ENCODE measurements at regions of chr6 and their contacts with region 1.

Region 1: DNA sequence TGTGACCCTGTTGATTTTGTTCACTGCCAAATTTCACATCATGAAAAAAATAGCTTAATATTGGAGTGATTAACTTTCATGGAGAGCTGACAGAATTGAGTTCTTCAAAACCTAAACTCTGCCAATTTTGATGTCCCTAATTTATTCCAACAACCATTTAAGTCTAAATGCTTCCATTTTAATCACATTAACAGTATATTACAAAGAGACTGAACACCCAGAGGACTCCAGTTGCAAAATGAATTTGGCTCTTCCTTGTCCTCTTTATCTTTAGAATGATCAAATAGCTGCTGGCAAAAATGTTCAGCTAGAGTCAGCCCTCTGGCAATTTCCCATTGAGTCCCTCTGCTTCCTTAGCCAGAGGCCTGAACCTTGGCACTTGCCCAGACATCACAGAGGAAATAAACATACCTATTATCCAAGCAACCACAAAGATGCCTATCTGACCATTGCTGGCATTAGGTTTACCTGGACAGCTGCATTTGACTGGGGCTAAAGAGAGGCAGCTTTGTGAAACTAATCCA is 299.0 kb upstream of the STXBP5 start:
- DNase-seq: no peak
- H3K4me3 ChIP-seq: no peak overlapping the region
- H3K4me3 Mint-ChIP-seq: no peak overlapping the region
- H3K27ac ChIP-seq: no peak overlapping the region
- H3K27ac Mint-ChIP-seq: no peak overlapping the region
- H3K4me1 ChIP-seq: peaks cover 8 to 19% of the 10 kb centered on the region in 2 donors
- H3K4me1 Mint-ChIP-seq: peaks cover 10% of the 10 kb centered on the region
- H3K27me3 ChIP-seq: no peaks in the 10 kb centered on the region
- H3K27me3 Mint-ChIP-seq: peaks cover 0 to 2% (median 2%) of the 10 kb centered on the region in 3 donors
- CTCF ChIP-seq: no peak

Region 2: DNA sequence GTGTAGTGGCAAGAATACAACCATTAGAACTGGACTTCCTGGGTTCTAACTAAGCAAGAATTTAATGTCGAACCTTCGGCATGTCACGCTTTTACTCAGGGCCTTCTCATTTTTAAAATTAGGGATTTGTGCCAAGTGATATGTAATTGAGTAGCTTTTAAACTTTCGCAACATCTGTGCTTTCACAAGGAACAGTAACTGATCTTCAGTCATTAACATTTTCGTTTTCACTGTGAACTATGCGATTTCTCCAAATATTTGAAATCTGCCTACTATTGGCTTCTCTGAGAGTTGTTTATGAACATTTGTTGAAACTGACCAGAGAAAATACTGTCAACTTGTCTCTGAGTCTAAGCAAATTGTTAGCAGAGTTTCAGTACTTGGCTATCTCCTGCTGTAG is 848.7 kb before region 1 on chr6:
- intact Hi-C with region 1: no loop called
- DNase-seq: no peak
- H3K4me3 ChIP-seq: no peak overlapping the region
- H3K4me3 Mint-ChIP-seq: no peak overlapping the region
- H3K27ac ChIP-seq: no peak overlapping the region
- H3K27ac Mint-ChIP-seq: no peak overlapping the region
- H3K4me1 ChIP-seq: no peaks in the 10 kb centered on the region
- H3K4me1 Mint-ChIP-seq: no peaks in the 10 kb centered on the region
- H3K27me3 ChIP-seq: no peaks in the 10 kb centered on the region
- H3K27me3 Mint-ChIP-seq: peaks cover 0 to 3% (median 2%) of the 10 kb centered on the region in 3 donors
- CTCF ChIP-seq: no peak

Region 3: DNA sequence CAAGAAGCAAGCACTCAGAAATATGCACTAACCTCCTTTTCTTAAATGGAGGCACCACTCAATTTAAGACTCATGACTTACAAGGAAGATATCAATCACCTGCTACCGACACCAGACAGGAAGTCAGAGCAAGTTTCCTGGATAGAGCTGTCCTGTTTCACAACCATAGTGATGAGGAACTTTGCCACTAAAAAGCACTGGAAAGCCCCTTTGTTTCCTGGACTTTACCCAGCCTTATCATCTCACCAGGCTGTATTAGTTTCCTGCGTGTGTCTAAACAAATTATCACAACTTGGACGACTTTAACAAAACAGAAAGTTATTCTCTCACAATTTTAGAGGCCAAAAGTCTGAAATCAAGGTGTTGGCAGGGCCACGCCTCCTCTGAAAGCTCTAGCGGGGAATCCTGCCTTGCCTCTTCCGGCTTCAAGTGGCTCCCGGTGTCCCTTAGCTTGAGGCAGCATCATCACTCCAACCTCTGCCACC is 45.1 kb after region 1 on chr6:
- intact Hi-C with region 1: loop called in 1 of 2 experiments (anchors 10 kb)
- DNase-seq: peak; percentile 57 to 92 (median 71)
- H3K4me3 ChIP-seq: peak overlapping the region in 1 of 3 experiments; percentile 9
- H3K4me3 Mint-ChIP-seq: no peak overlapping the region
- H3K27ac ChIP-seq: no peak overlapping the region
- H3K27ac Mint-ChIP-seq: peak overlapping the region in 6 of 7 donors; percentile 11 to 72 (median 42)
- H3K4me1 ChIP-seq: peaks cover 10 to 11% of the 10 kb centered on the region in 2 donors
- H3K4me1 Mint-ChIP-seq: peaks cover 12% of the 10 kb centered on the region
- H3K27me3 ChIP-seq: no peaks in the 10 kb centered on the region
- H3K27me3 Mint-ChIP-seq: peaks cover 0 to 2% (median 0%) of the 10 kb centered on the region in 3 donors
- CTCF ChIP-seq: no peak